Posterior vena cava (tissue), 2 donors: ENCODE measurements at regions of chr20 and their contacts with region 1.

Region 1: GRCh38 chr20:33026779-33027759 is 4.4 kb upstream of the BPIFB6 start:
- DNase-seq: no peak

Region 2: DNA sequence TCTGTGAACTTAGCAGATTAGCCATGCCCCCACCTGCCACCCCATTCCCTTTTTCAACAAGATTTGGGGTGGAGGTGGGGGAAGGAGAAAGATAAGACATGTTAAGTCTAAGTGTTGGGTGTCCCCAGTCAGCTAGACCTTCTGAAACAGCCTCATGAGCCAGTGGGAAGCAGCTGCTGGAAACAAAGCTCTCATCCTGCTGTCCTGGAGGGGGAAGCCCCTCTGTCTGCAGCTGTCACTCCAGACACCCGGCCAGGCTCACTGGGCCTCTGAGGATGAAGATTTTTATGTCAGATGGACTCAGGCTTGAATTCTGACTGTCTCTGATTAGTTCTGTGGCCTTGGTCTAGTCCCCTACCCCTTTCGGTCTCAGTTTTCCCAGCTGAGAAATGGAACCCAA is 27.7 kb after region 1 on chr20:
- intact Hi-C with region 1: loop called in 1 of 2 experiments (anchors 1 kb)
- DNase-seq: no peak